ENCODE measurements at regions of chr11 and their contacts with region 1.

Region 1: GRCh38 chr11:44095506-44096394 is at the start of gene EXT2:
- DNase-seq: peak; percentile 19
- H3K4me3 ChIP-seq: peak within 1 kb of the TSS; percentile 82
- CTCF ChIP-seq: peak; percentile 97

Region 2: DNA sequence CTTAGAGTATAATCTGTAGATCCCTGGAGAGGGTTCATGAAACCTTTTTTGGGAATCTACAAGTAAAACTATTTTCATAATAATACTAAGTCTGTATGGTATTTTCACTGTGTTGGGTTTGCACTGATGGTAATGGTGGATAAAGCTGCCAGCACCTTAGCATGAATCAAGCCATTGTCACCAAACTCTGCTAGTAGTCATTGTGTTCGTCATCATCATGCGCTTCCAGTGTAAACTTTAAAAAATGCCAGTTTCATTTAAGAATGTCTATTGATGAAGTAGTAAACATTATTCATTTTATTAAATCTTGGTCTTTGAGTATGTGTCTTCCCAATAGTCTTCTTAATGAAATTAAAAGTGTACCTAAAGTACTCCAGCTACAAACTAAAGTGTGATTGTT is 200.1 kb before region 1 on chr11:
- CTCF ChIA-PET with region 1: interaction called, 16 read pairs
- POLR2A ChIA-PET with region 1: no interaction called
- DNase-seq: no peak
- H3K4me3 ChIP-seq: no peak overlapping the region
- CTCF ChIP-seq: no peak

Region 3: GRCh38 chr11:43944761-43945311 is 150.9 kb before region 1 on chr11:
- CTCF ChIA-PET with region 1: no interaction called
- POLR2A ChIA-PET with region 1: no interaction called
- DNase-seq: no peak
- H3K4me3 ChIP-seq: peak overlapping the region; percentile 62
- CTCF ChIP-seq: peak; percentile 84

Region 4: GRCh38 chr11:44083906-44084305 is 11.8 kb before region 1 on chr11:
- CTCF ChIA-PET with region 1: interaction called, 217 read pairs
- POLR2A ChIA-PET with region 1: no interaction called
- DNase-seq: no peak
- H3K4me3 ChIP-seq: no peak overlapping the region
- CTCF ChIP-seq: no peak

Region 5: DNA sequence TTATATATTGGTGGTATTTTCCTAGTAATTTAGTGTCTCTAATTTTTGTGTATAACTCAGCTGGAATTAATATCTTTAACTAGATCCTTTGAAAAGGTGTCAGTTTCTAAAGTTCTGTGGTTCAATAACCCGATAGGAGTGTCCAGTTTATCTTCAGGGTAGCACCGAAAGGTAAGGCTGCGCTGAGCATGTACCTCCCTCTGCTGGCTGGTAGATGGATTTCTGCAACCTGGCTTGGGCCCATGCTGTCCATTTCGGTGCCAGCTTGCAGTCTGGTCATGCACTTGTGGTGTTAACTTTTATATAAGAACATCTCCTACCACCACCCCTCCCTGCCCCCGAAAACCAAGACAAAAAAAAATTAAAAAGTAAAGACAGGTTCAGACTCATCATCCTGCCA is 24.4 kb after region 1 on chr11:
- CTCF ChIA-PET with region 1: interaction called, 19 read pairs
- POLR2A ChIA-PET with region 1: no interaction called
- DNase-seq: no peak
- H3K4me3 ChIP-seq: no peak overlapping the region
- CTCF ChIP-seq: peak; percentile 20

Region 6: DNA sequence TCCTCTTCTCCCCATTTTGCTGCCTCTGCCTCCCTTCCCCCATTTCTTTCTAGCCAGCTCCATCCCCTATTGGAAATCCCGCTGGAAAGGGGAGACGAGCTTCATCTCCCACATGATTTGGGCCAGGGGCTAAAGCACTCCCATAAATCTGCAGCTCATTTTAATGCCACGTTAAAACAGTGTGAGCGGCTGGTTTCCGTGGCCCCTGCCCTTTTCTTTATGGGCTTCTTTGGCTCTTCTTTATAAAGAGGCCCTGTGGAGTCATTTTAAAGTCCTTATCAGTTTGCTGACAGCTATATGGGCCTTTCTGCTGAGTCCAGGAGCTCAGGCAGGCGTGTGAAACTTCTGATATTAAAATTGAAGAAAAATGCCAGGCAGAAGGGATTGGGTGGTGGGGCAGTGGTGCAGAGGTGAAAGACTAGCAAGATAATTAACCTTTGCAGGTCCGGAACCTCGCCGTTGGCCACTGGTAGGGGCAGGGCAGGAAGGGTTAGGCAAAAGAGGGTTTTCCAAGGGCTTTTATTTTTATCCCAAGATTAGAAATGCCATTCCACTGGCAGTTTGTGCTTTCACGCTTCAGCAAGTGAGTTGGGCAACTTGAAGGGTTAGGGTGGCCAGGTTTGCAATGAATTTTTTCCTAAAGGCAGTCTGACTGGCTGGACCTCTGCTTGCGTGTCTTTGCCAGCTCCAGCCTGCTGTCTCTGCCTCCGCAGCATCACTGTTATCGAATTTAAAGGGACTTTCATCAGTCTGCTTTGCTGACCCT is 44.0 kb after region 1 on chr11:
- CTCF ChIA-PET with region 1: interaction called, 28 read pairs
- POLR2A ChIA-PET with region 1: no interaction called
- DNase-seq: no peak
- H3K4me3 ChIP-seq: no peak overlapping the region
- CTCF ChIP-seq: no peak

Region 7: DNA sequence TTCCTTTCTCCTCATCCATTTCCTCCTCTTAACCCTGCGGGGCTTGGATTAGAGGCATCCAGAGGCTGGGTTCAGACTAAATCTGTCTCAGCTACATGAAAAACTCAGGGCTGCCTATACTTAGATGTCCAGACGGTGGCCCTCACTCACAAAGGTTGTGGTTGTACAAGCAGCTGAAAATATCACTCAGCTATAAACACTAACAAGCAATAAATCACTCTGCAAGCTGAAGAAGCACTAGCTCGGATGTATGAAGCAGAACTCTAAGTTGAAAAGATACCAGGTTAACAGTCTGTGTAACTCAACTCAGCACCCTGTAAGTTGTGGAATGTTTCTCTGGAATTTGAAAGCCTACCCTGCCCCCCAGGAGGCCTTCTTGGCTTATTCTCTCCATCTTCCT is 82.6 kb after region 1 on chr11:
- CTCF ChIA-PET with region 1: interaction called, 17 read pairs
- POLR2A ChIA-PET with region 1: no interaction called
- DNase-seq: peak; percentile 59
- H3K4me3 ChIP-seq: no peak overlapping the region
- CTCF ChIP-seq: peak; percentile 40

Region 8: GRCh38 chr11:44203270-44204043 is 107.7 kb after region 1 on chr11:
- CTCF ChIA-PET with region 1: no interaction called
- POLR2A ChIA-PET with region 1: no interaction called
- DNase-seq: no peak
- H3K4me3 ChIP-seq: no peak overlapping the region
- CTCF ChIP-seq: no peak

Region 9: DNA sequence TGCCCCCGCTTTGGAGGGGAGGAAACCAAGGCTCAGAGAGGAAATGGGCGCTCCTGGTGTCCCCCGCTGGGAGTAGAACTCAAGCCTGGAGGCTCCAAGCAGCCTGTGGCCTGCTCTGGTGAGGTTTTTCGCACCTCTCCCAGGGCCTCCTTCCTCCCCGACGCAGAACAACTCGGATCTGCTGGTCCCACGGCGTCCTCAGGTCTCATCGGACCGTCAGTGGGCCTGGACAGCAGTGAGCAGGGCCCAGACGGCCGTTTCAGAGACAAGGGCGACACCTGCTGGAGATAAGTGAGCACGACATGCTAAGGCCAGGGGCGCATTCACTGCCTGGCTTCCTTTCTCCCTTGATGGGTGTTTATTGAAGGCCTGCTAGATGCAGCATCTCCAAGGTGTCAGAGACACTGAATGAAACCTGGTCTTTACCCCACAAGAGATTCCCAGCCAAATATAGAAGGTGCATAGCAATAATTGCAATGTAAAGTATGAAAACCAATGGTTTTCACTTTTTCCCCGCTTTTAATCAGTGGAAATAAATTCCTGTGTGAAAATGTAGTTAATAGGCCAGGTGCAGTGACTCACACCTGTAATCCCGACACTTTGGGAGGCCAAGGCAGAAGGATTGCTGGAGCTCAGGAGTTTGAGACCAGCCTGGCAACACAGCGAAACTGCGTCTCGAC is 442.8 kb after region 1 on chr11:
- CTCF ChIA-PET with region 1: interaction called, 166 read pairs
- POLR2A ChIA-PET with region 1: no interaction called
- DNase-seq: no peak
- H3K4me3 ChIP-seq: no peak overlapping the region
- CTCF ChIP-seq: peak; percentile 95

Measured in AG04449 (cell line).